GM10248 (cell line): ENCODE measurements at regions of chr19 and their contacts with region 1.

Region 1: GRCh38 chr19:35352448-35353304 is 5.0 kb downstream of the FFAR1 start:
- DNase-seq: peak; percentile 82
- CTCF ChIP-seq: peak; percentile 79

Region 2: DNA sequence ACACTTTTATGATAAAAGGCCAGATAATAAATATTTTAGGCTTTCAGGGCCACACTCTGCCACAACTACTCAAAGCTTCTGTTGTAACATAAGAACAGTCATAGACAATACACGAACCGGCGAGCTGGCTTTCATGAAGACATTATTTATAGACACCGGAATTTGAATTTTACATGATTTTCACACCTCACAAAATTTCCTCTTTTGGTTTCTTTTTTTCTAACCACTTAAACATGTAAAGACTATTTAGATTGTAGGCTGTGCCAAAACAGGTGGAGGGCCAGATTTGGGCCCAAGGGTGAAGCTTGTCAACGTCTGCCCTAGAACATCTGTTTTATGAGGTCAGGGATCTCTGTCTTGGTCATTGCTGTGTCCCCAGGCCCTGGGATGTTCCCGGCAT is 266.7 kb before region 1 on chr19:
- CTCF ChIA-PET with region 1: no interaction called
- POLR2A ChIA-PET with region 1: no interaction called
- DNase-seq: peak; percentile 65
- CTCF ChIP-seq: no peak

Region 3: GRCh38 chr19:35363001-35363590 is 10.4 kb after region 1 on chr19:
- CTCF ChIA-PET with region 1: interaction called, 23 read pairs
- POLR2A ChIA-PET with region 1: interaction called, 4 read pairs
- DNase-seq: no peak
- CTCF ChIP-seq: no peak

Region 4: GRCh38 chr19:35403116-35403760 is 50.6 kb after region 1 on chr19:
- CTCF ChIA-PET with region 1: interaction called, 12 read pairs
- POLR2A ChIA-PET with region 1: no interaction called
- DNase-seq: no peak
- CTCF ChIP-seq: no peak

Region 5: DNA sequence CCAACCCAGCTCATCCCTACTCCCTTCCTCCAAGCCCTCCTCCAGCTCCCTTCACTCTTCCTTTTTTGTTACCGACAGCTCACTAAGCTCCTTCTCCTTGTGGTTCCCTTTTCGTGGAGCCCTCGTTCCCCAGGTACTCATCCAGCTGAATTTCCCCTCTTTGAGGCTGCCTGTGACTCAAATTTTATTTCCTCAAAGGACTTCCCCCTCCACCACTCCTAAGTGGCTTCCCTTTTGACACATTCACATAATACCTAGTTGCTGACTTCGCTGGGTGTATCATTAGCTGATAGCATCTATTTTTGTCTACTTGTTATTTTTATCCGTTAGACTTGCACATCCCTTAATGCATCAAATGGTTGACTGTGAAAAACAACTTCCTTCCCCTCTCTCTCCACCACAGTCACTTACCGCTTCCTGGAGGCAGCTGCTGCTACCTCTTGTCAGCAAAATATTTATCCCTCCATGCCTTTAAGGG is 109.8 kb after region 1 on chr19:
- CTCF ChIA-PET with region 1: interaction called, 125 read pairs
- POLR2A ChIA-PET with region 1: interaction called, 3 read pairs
- DNase-seq: peak; percentile 74
- CTCF ChIP-seq: peak; percentile 39

Region 6: GRCh38 chr19:35484252-35485036 is 131.8 kb after region 1 on chr19:
- CTCF ChIA-PET with region 1: interaction called, 26 read pairs
- POLR2A ChIA-PET with region 1: no interaction called
- DNase-seq: peak; percentile 81
- CTCF ChIP-seq: no peak